ENCODE measurements at regions of chr1 and their contacts with region 1.

Region 1: GRCh38 chr1:110554871-110555801 is 36.2 kb upstream of the KCNA10 start:
- DNase-seq: peak in 4 of 5 donors; percentile 43 to 56 (median 51)
- H3K4me3 ChIP-seq: no peak overlapping the region
- H3K4me3 Mint-ChIP-seq: peak overlapping the region in 6 of 8 donors; percentile 29 to 68 (median 50)
- H3K27ac ChIP-seq: no peak overlapping the region
- H3K27ac Mint-ChIP-seq: no peak overlapping the region
- H3K4me1 ChIP-seq: peaks cover 3% of the 10 kb centered on the region
- H3K4me1 Mint-ChIP-seq: peaks cover 2 to 9% (median 4%) of the 10 kb centered on the region in 4 donors
- H3K27me3 ChIP-seq: peaks cover 18% of the 10 kb centered on the region
- H3K27me3 Mint-ChIP-seq: peaks cover 30 to 43% of the 10 kb centered on the region in 2 donors

Region 2: DNA sequence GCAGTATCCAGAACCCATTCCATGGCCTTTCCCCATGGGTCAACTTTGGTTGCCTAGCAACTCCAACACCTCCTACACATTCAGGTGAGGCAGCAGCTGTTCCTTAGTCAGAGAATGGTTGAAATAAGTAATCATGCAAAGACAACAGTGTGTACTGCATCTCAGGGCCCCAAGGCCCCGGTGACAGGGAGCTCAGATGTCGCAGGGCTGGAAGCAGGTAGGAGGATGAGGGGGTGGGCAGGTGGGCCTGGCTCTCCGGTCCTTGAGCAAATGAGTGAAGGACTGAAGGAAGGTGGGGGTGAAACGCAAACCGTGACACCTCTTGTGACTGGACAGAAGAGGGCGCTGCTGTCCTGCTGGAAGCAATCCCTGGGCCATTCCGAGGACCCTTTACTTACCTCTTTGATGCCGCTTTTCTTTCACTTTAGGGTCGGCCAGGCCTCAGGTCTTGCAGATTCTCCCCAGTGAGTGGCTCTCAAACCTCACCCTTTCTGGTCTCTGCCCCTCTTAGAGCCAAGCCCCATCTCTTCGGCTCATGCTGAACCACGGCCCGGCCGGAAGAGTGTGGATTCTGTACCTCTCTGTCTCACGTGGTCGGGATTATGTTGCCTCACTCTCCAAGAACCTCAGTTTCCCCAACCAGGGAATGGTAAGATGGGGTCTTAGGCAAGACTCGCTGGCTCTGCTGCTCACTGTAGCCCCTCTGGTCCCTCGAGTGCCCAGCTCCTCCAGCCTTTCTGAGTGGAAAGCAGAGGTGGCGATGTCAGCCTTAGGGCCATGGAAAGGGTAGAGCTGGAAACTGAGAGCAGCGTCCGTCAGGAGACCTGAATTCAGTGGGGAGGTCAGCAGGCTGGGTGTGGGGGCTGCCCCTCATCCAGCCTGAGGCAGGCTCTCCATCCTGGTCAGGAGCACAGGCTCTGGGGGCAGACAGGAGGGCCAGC is 30.6 kb before region 1 on chr1:
- CTCF ChIA-PET with region 1: interaction called, 3 read pairs
- POLR2A ChIA-PET with region 1: no interaction called
- intact Hi-C with region 1: loop called (anchors 1 kb)
- DNase-seq: peak in 4 of 5 donors; percentile 25 to 48 (median 44)
- H3K4me3 ChIP-seq: no peak overlapping the region
- H3K4me3 Mint-ChIP-seq: peak overlapping the region in 5 of 8 donors; percentile 14 to 61 (median 51)
- H3K27ac ChIP-seq: no peak overlapping the region
- H3K27ac Mint-ChIP-seq: no peak overlapping the region
- H3K4me1 ChIP-seq: no peaks in the 10 kb centered on the region
- H3K4me1 Mint-ChIP-seq: peaks cover 0 to 6% (median 2%) of the 10 kb centered on the region in 4 donors
- H3K27me3 ChIP-seq: peaks cover 5% of the 10 kb centered on the region
- H3K27me3 Mint-ChIP-seq: peaks cover 15 to 28% of the 10 kb centered on the region in 2 donors

Region 3: GRCh38 chr1:110572751-110573150 is 17.6 kb after region 1 on chr1:
- CTCF ChIA-PET with region 1: interaction called, 11 read pairs
- POLR2A ChIA-PET with region 1: no interaction called
- intact Hi-C with region 1: no loop called
- DNase-seq: no peak
- H3K4me3 ChIP-seq: no peak overlapping the region
- H3K4me3 Mint-ChIP-seq: no peak overlapping the region
- H3K27ac ChIP-seq: no peak overlapping the region
- H3K27ac Mint-ChIP-seq: no peak overlapping the region
- H3K4me1 ChIP-seq: no peaks in the 10 kb centered on the region
- H3K4me1 Mint-ChIP-seq: no peaks in the 10 kb centered on the region
- H3K27me3 ChIP-seq: no peaks in the 10 kb centered on the region
- H3K27me3 Mint-ChIP-seq: peaks cover 19 to 23% of the 10 kb centered on the region in 2 donors

Measured in CD4-positive, alpha-beta memory T cell (primary cell).